ENCODE measurements at regions of chr20 and their contacts with region 1.

Region 1: DNA sequence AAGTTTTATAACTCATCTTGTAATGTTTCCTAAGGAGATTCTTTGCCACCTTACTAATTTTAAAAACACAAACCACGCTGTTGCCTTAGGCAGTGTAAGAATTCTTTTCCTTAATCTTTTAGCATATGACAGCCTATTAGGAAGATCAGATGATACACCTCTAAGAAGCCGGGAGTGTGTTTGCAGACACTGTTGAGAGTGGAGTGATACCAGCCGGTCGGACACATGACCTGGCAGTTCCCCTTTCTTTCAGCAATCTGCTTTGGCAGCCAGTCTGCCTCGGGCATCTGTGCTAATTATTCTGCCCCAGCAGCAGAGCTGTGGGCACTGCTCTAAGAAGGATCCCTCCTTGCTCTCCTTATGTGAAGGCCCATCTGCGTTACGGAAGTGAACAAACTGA is 50.9 kb downstream of the PLCB4 start:
- DNase-seq: no peak
- ATAC-seq: no peak
- H3K4me3 Mint-ChIP-seq: no peak overlapping the region
- H3K27ac Mint-ChIP-seq: no peak overlapping the region
- H3K4me1 Mint-ChIP-seq: no peaks in the 10 kb centered on the region
- H3K27me3 Mint-ChIP-seq: no peaks in the 10 kb centered on the region
- CTCF ChIP-seq: no peak

Region 2: DNA sequence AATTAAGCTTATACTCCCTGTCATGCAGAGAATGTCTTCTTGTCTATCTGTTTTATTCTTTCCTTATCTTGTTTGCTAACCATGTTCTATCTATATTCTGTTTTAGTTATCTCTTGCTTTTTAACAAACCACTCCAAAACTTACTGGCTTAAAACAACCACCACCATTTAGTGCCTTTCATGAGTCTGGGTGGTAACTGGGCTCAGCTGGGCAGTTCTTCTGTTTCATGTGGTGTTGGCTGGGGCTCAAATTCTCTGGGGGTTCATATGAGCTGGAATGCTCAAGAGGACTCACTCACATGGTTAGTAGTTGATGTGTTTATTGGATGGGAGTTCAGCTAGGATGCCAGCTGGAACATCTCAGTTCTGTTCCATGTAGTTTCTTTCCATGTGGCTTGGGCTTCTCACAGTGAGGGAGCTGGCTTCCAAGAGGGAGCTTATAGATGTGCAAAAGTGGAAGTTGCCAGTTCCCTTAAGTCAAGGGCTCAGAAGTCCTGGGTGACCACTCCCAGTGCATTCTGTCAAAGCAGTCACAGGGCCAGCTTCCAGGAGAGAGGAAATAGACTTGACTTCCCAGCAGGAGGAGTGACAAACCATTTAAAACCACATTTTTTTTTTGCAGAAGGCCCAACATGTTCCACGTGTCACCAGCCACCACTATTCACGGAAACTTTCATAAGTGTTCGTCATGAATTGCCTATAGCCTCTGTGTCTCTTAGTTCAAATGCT is 19.5 kb after region 1 on chr20:
- CTCF ChIA-PET with region 1: no interaction called
- POLR2A ChIA-PET with region 1: no interaction called
- intact Hi-C with region 1: no loop called
- DNase-seq: no peak
- ATAC-seq: no peak
- H3K4me3 Mint-ChIP-seq: no peak overlapping the region
- H3K27ac Mint-ChIP-seq: no peak overlapping the region
- H3K4me1 Mint-ChIP-seq: no peaks in the 10 kb centered on the region
- H3K27me3 Mint-ChIP-seq: no peaks in the 10 kb centered on the region
- CTCF ChIP-seq: no peak

Region 3: GRCh38 chr20:9172851-9173250 is 53.1 kb after region 1 on chr20:
- CTCF ChIA-PET with region 1: no interaction called
- POLR2A ChIA-PET with region 1: no interaction called
- intact Hi-C with region 1: loop called (anchors 10 kb)
- DNase-seq: no peak
- ATAC-seq: no peak
- H3K4me3 Mint-ChIP-seq: no peak overlapping the region
- H3K27ac Mint-ChIP-seq: no peak overlapping the region
- H3K4me1 Mint-ChIP-seq: no peaks in the 10 kb centered on the region
- H3K27me3 Mint-ChIP-seq: no peaks in the 10 kb centered on the region
- CTCF ChIP-seq: no peak

Measured in activated CD8-positive, alpha-beta T cell treated with anti-CD3 and anti-CD28 coated beads for 36 hours (primary cell).